A673 (cell line): ENCODE measurements at regions of chr1 and their contacts with region 1.

Region 1: GRCh38 chr1:186985889-186986491 is 157.2 kb downstream of the PLA2G4A start:
- DNase-seq: peak; percentile 82
- H3K4me3 ChIP-seq: no peak overlapping the region
- H3K27ac ChIP-seq: no peak overlapping the region
- H3K4me1 ChIP-seq: peaks cover 4% of the 10 kb centered on the region
- H3K27me3 ChIP-seq: no peaks in the 10 kb centered on the region
- CTCF ChIP-seq: peak; percentile 85

Region 2: GRCh38 chr1:186404454-186405051 is 581.4 kb before region 1 on chr1:
- CTCF ChIA-PET with region 1: no interaction called
- POLR2A ChIA-PET with region 1: no interaction called
- intact Hi-C with region 1: loop called (anchors 2 kb)
- DNase-seq: peak; percentile 90
- H3K4me3 ChIP-seq: no peak overlapping the region
- H3K27ac ChIP-seq: no peak overlapping the region
- H3K4me1 ChIP-seq: peaks cover 6% of the 10 kb centered on the region
- H3K27me3 ChIP-seq: no peaks in the 10 kb centered on the region
- CTCF ChIP-seq: peak; percentile 89

Region 3: GRCh38 chr1:186482661-186483255 is 503.2 kb before region 1 on chr1:
- CTCF ChIA-PET with region 1: interaction called, 3 read pairs
- POLR2A ChIA-PET with region 1: no interaction called
- intact Hi-C with region 1: loop called (anchors 1 kb)
- DNase-seq: peak; percentile 88
- H3K4me3 ChIP-seq: no peak overlapping the region
- H3K27ac ChIP-seq: peak overlapping the region; percentile 11
- H3K4me1 ChIP-seq: peaks cover 10% of the 10 kb centered on the region
- H3K27me3 ChIP-seq: no peaks in the 10 kb centered on the region
- CTCF ChIP-seq: peak; percentile 99

Region 4: DNA sequence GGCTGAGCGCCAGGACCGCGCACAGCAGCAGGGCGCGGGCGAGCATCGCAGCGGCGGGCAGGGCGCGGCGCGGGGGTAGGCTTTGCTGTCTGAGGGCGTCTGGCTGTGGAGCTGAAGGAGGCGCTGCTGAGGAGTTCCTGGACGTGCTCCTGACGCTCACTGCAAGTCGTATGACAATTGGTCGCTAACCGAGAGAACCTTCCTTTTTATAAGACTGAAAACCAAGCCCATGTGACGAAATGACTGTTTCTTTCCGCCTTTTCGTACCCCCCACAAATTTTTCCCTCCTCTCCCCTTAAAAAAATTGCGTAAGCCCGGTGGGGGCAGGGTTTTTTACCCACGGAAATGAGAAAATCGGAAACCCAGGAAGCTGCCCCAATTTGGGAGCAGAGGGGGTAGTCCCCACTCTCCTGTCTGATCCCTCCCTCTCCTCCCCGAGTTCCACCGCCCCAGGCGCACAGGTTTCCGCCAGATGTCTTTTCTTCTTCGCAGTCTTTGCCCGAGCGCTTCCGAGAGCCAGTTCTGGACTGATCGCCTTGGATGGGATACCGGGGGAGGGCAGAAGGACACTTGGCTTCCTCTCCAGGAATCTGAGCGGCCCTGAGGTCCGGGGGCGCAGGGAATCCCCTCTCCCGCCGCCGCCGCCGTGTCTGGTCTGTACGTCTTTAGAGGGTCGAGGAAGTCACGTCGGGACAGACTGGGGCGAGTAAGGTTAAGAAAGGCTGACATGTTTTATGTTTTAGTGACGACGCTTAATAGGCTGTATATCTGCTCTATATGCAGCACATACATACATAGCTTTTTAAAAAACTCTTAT is 305.5 kb before region 1 on chr1 and contains the start of gene PTGS2:
- CTCF ChIA-PET with region 1: interaction called, 3 read pairs
- POLR2A ChIA-PET with region 1: interaction called, 6 read pairs
- intact Hi-C with region 1: loop called (anchors 5 kb)
- DNase-seq: peak; percentile 96
- H3K4me3 ChIP-seq: peak within 1 kb of the TSS; percentile 81
- H3K27ac ChIP-seq: peak within 1 kb of the TSS; percentile 92
- H3K4me1 ChIP-seq: peaks cover 21% of the 10 kb centered on the region
- H3K27me3 ChIP-seq: no peaks in the 10 kb centered on the region
- CTCF ChIP-seq: peak; percentile 78
- total RNA-seq, gene PTGS2: 4.3 and 5.8 TPM in 2 replicates

Region 5: GRCh38 chr1:186722711-186723309 is 263.2 kb before region 1 on chr1:
- CTCF ChIA-PET with region 1: no interaction called
- POLR2A ChIA-PET with region 1: no interaction called
- intact Hi-C with region 1: loop called (anchors 2 kb)
- DNase-seq: peak; percentile 78
- H3K4me3 ChIP-seq: no peak overlapping the region
- H3K27ac ChIP-seq: no peak overlapping the region
- H3K4me1 ChIP-seq: no peaks in the 10 kb centered on the region
- H3K27me3 ChIP-seq: no peaks in the 10 kb centered on the region
- CTCF ChIP-seq: peak; percentile 86

Region 6: GRCh38 chr1:186754542-186755137 is 231.3 kb before region 1 on chr1:
- CTCF ChIA-PET with region 1: no interaction called
- POLR2A ChIA-PET with region 1: no interaction called
- intact Hi-C with region 1: no loop called
- DNase-seq: peak; percentile 24
- H3K4me3 ChIP-seq: no peak overlapping the region
- H3K27ac ChIP-seq: no peak overlapping the region
- H3K4me1 ChIP-seq: no peaks in the 10 kb centered on the region
- H3K27me3 ChIP-seq: no peaks in the 10 kb centered on the region
- CTCF ChIP-seq: no peak

Region 7: DNA sequence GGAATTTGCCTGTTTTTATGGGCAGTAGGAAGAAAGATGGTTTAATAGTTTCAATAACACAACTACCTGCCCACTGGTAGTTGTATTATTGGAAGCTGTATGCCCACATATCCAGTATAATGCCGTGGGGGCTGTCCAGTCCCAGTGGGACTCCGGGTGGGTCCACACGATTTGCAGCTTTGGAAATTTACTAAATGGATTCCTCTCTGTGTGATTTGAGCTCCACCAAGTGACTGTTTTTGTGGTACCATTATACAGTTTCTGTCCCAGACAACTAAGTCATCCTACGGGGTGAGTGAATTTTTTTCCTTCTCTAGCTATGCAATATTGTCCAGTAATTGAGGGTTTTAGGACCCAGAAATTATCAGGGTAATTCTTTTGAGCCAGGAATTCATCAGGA is 70.4 kb before region 1 on chr1:
- CTCF ChIA-PET with region 1: interaction called, 5 read pairs
- POLR2A ChIA-PET with region 1: no interaction called
- intact Hi-C with region 1: loop called (anchors 1 kb)
- DNase-seq: peak; percentile 26
- H3K4me3 ChIP-seq: no peak overlapping the region
- H3K27ac ChIP-seq: no peak overlapping the region
- H3K4me1 ChIP-seq: no peaks in the 10 kb centered on the region
- H3K27me3 ChIP-seq: no peaks in the 10 kb centered on the region
- CTCF ChIP-seq: peak; percentile 44; the same call in 1 of the 2 replicates